Adrenal gland (tissue), 19 donors: ENCODE measurements at regions of chr1 and their contacts with region 1.

Region 1: DNA sequence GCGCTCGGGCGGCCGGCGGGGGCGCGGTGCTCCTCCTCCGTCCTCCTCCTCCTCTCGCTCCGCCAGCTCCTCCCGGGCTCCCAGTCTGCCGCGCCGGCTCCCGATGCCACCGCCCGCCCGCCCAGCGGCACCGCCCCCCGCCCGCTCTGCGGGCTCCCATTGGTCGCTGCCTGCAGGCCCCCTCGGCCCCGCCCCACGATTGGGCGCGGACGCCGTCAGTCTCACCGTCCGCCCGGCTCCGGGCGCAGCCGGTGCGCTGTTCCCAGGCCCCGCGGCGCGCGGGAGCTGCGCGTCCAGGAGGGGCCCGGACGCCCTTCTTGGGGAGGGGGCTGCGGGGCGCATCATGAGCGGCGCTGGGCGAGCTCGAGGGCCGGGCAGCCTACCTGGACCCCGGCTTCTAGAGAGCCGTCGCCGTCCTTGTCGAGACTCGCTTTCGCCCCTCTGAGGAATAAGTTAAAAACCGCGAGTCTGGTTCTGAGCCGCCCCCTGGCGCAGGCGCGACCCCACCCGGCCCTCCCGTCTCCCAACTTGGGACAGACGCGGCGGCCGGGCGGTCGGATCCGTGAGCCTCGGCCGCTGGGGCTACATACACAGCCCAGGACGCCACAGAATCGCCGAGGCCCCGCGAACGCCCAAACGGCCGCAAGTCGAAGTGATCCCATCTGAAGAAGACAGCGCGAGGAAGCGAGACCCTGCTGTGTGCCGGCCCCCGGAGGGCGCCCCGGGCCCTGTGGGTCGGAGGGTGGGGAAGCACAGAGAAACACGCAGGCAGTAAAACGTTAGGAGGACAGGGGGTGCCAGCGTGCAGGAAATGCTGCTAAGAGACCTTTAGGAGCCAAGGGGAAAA is at the start of gene SIPA1L2:
- DNase-seq: peak; percentile 91 to 97 (median 94)
- H3K4me3 ChIP-seq: peak within 1 kb of the TSS in 2 of 4 donors; percentile 55 to 76
- H3K27ac ChIP-seq: peak within 1 kb of the TSS in 4 of 5 donors; percentile 64 to 82 (median 74)
- H3K4me1 ChIP-seq: peaks cover 0 to 23% of the 10 kb centered on the region in 2 donors
- H3K27me3 ChIP-seq: no peaks in the 10 kb centered on the region
- CTCF ChIP-seq: peak; percentile 21 to 58 (median 41)
- POLR2A ChIP-seq: peak in 1 of 2 donors; percentile 67
- total RNA-seq, gene SIPA1L2: 8.3 to 15.9 (median 11.0) TPM

Region 2: DNA sequence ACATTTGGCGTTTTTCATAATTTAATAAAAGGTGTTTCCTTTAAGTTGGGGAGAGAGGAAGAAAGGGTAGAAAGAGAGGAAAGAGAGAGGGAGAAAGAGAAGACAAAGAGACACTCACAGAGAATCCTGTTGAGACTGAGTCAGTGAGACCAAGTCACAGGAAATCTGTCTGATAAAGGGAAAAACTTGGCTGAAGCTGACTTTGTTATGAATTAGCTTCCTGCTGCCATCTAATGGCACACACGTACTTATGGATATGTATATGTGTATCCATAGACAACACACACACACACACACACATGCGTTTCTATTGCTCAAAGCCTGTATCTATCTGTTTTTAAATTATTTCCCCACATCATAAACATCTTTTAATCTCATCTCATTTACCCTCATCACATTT is 1046.1 kb before region 1 on chr1:
- intact Hi-C with region 1: no loop called
- DNase-seq: peak in 1 of 7 donors; percentile 23
- H3K4me3 ChIP-seq: no peak overlapping the region
- H3K27ac ChIP-seq: no peak overlapping the region
- H3K4me1 ChIP-seq: no peaks in the 10 kb centered on the region
- H3K27me3 ChIP-seq: no peaks in the 10 kb centered on the region
- CTCF ChIP-seq: peak in 3 of 6 experiments; percentile 22 to 35 (median 23)
- POLR2A ChIP-seq: no peak

Region 3: GRCh38 chr1:231866392-231867331 is 763.6 kb before region 1 on chr1:
- intact Hi-C with region 1: loop called in 1 of 2 experiments (anchors 10 kb)
- DNase-seq: peak; percentile 28 to 79 (median 54)
- H3K4me3 ChIP-seq: no peak overlapping the region
- H3K27ac ChIP-seq: no peak overlapping the region
- H3K4me1 ChIP-seq: peaks cover 8 to 14% of the 10 kb centered on the region in 2 donors
- H3K27me3 ChIP-seq: no peaks in the 10 kb centered on the region
- CTCF ChIP-seq: peak; percentile 71 to 92 (median 85)
- POLR2A ChIP-seq: no peak

Region 4: GRCh38 chr1:232737917-232738316 is 107.6 kb after region 1 on chr1:
- intact Hi-C with region 1: no loop called
- DNase-seq: no peak
- H3K4me3 ChIP-seq: no peak overlapping the region
- H3K27ac ChIP-seq: no peak overlapping the region
- H3K4me1 ChIP-seq: no peaks in the 10 kb centered on the region
- H3K27me3 ChIP-seq: no peaks in the 10 kb centered on the region
- CTCF ChIP-seq: no peak
- POLR2A ChIP-seq: no peak

Region 5: GRCh38 chr1:232943679-232944252 is 313.5 kb after region 1 on chr1:
- intact Hi-C with region 1: loop called in 1 of 2 experiments (anchors 10 kb)
- DNase-seq: no peak
- H3K4me3 ChIP-seq: no peak overlapping the region
- H3K27ac ChIP-seq: no peak overlapping the region
- H3K4me1 ChIP-seq: no peaks in the 10 kb centered on the region
- H3K27me3 ChIP-seq: no peaks in the 10 kb centered on the region
- CTCF ChIP-seq: no peak
- POLR2A ChIP-seq: no peak

Region 6: DNA sequence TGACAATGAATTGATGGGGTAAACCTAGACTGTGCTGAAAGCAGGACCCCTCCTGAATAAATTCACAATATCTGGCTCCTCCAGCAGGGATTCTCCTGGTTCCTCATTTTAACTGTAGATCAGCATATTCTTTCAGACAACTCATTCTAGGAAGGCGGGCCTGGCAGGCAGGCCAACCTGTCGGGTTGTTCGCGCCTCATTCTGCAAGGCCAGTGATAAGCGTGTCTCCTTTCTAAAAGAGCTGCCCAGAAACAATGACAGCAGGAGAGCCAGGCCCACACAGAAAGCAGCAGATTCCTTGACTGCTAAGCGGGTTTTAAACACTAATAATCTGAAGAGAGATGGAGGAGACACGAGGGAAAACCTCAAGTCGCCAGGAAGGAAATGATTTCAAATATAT is 390.2 kb after region 1 on chr1:
- intact Hi-C with region 1: loop called in 1 of 2 experiments (anchors 5 kb)
- DNase-seq: no peak
- H3K4me3 ChIP-seq: no peak overlapping the region
- H3K27ac ChIP-seq: no peak overlapping the region
- H3K4me1 ChIP-seq: no peaks in the 10 kb centered on the region
- H3K27me3 ChIP-seq: no peaks in the 10 kb centered on the region
- CTCF ChIP-seq: no peak
- POLR2A ChIP-seq: no peak

Region 7: GRCh38 chr1:233172227-233172626 is 542.0 kb after region 1 on chr1:
- intact Hi-C with region 1: loop called in 1 of 2 experiments (anchors 10 kb)
- DNase-seq: peak in 2 of 7 donors; percentile 13 to 20
- H3K4me3 ChIP-seq: no peak overlapping the region
- H3K27ac ChIP-seq: no peak overlapping the region
- H3K4me1 ChIP-seq: no peaks in the 10 kb centered on the region
- H3K27me3 ChIP-seq: no peaks in the 10 kb centered on the region
- CTCF ChIP-seq: peak; percentile 5 to 51 (median 39)
- POLR2A ChIP-seq: no peak

Region 8: DNA sequence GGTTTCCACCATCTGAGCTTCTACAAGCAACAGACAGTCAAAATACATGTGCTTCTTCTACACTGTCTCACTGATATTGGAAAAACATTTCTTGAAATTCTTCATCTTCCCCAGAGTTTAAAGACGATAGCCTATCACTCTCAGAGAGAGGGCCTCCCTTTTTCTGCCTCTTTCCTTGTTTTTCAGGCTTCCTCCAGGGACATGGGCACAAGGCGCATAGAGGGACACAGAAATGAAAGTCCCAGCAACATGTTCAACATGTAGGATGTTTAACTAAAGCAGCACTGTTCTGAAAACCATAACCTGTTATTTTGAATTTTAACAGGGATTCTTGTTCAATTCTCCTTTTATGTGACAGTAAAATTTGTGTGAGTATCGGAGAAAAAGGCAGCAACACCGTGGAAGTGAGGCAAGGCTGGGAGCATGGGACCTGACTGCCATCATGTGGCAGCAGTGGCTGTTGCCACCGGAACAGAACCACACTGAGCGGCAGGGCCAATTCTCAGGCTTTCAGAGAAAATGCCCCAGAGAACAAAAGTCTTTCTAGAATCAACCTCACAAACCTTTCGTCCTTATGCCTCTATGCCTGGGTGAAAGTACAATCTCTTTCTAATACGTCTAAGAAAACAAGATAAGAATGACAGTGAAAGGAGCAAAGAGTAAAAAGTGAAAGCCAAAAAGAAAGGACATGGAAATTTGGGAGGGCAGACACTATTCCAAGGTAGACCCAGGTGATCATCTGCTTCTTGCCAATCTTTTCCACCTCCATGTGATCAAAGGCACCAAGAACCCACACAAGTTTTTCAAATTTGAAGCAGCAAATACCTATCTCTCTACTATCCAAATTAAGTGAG is 610.8 kb after region 1 on chr1:
- intact Hi-C with region 1: loop called (anchors 5 to 10 kb)
- DNase-seq: peak; percentile 56 to 85 (median 72)
- H3K4me3 ChIP-seq: peak overlapping the region in 1 of 4 donors; percentile 37
- H3K27ac ChIP-seq: no peak overlapping the region
- H3K4me1 ChIP-seq: peaks cover 0 to 16% of the 10 kb centered on the region in 2 donors
- H3K27me3 ChIP-seq: no peaks in the 10 kb centered on the region
- CTCF ChIP-seq: peak; percentile 47 to 89 (median 85)
- POLR2A ChIP-seq: no peak